ENCODE measurements at regions of chr15 and their contacts with region 1.

Region 1: DNA sequence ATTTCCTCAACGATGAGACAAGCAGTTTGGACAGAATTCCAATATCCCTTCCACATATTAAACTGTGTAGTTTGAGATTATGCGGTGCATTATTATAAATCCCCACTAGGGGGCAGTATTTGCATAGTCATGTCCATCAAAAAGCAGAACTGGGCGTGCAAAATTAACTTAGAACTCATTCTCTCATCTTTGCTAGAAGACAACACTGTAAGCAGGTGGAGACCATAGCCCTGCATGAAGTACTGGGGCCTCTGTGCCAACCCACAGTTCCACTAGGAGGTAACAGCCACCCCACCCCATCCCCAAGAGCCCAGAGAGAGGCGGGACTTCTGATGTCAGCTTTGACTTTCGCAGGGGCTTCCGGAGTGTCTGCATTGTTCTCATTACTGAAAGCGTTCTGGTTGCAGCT is 106.6 kb upstream of the TMC3 start:
- DNase-seq: peak; percentile 70
- H3K4me3 ChIP-seq: no peak overlapping the region
- H3K27ac ChIP-seq: no peak overlapping the region
- H3K4me1 ChIP-seq: peaks cover under 1% of the 10 kb centered on the region
- H3K27me3 ChIP-seq: no peaks in the 10 kb centered on the region
- CTCF ChIP-seq: peak; percentile 48 to 66
- POLR2A ChIP-seq: no peak

Region 2: GRCh38 chr15:81225161-81225671 is 255.4 kb before region 1 on chr15:
- CTCF ChIA-PET with region 1: no interaction called
- POLR2A ChIA-PET with region 1: no interaction called
- dilution Hi-C with region 1: no loop called
- intact Hi-C with region 1: no loop called
- DNase-seq: no peak
- H3K4me3 ChIP-seq: no peak overlapping the region
- H3K27ac ChIP-seq: no peak overlapping the region
- H3K4me1 ChIP-seq: no peaks in the 10 kb centered on the region
- H3K27me3 ChIP-seq: peaks cover 0 to 3% of the 10 kb centered on the region in 2 experiments
- CTCF ChIP-seq: no peak
- POLR2A ChIP-seq: no peak

Region 3: GRCh38 chr15:81531109-81531592 is 50.5 kb after region 1 on chr15:
- CTCF ChIA-PET with region 1: interaction called, 3 read pairs
- POLR2A ChIA-PET with region 1: no interaction called
- dilution Hi-C with region 1: no loop called
- intact Hi-C with region 1: loop called (anchors 2 kb)
- DNase-seq: peak; percentile 98
- H3K4me3 ChIP-seq: peak overlapping the region in 1 of 3 experiments; percentile 11
- H3K27ac ChIP-seq: peak overlapping the region; percentile 70
- H3K4me1 ChIP-seq: peaks cover 26% of the 10 kb centered on the region
- H3K27me3 ChIP-seq: no peaks in the 10 kb centered on the region
- CTCF ChIP-seq: no peak
- POLR2A ChIP-seq: peak; percentile 67

Region 4: DNA sequence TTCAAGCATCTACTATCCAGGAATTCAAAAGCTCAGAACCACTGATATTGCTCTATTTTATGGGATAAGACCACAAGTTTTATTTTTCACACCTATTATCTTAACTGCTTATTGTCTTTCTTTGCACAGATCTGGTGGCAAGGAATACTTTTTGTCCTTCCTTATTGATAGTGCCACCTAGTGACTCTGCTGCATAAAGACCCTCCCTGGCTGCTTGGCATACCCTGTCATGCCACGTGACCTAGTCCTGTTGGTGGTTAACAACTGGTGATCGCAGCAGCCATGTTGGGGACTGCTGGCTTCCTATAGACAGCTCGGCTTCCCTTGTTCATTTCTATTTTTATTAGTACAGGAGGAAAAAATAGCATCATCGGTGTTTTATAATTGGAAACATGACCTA is 328.9 kb after region 1 on chr15:
- CTCF ChIA-PET with region 1: no interaction called
- POLR2A ChIA-PET with region 1: no interaction called
- dilution Hi-C with region 1: no loop called
- intact Hi-C with region 1: loop called (anchors 1 kb)
- DNase-seq: peak; percentile 15
- H3K4me3 ChIP-seq: no peak overlapping the region
- H3K27ac ChIP-seq: no peak overlapping the region
- H3K4me1 ChIP-seq: no peaks in the 10 kb centered on the region
- H3K27me3 ChIP-seq: no peaks in the 10 kb centered on the region
- CTCF ChIP-seq: peak in 1 of 2 donors; percentile 13
- POLR2A ChIP-seq: no peak

Region 5: DNA sequence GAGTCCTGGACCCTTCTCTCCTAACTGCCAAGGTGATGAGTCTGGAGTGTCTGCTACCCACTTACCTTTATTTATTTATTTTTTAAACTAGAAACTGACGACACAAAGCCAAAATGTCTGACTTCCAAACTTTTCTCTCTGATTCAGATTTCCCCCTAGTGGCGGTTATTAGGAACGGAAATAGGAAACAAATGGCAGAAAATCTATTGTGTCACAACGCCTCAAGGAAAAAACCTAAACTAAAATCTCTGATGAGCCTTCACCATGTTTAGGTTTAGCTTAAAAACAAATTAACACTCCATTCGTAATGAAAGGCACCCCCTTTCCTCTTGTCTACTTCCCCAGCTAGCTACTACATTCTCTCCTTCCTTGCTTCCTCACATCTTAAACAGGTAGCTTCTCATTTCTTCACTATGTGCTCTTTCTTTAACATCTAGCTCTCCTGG is 659.2 kb after region 1 on chr15:
- CTCF ChIA-PET with region 1: no interaction called
- POLR2A ChIA-PET with region 1: no interaction called
- dilution Hi-C with region 1: no loop called
- intact Hi-C with region 1: loop called (anchors 5 kb)
- DNase-seq: peak; percentile 69
- H3K4me3 ChIP-seq: no peak overlapping the region
- H3K27ac ChIP-seq: peak overlapping the region; percentile 30
- H3K4me1 ChIP-seq: peaks cover 14% of the 10 kb centered on the region
- H3K27me3 ChIP-seq: no peaks in the 10 kb centered on the region
- CTCF ChIP-seq: peak; percentile 51 to 54
- POLR2A ChIP-seq: no peak